Activated naive CD4-positive, alpha-beta T cell treated with anti-CD3 and anti-CD28 coated beads for 36 hours (primary cell): ENCODE measurements at regions of chr14 and their contacts with region 1.

Region 1: GRCh38 chr14:91893007-91893406 is 25.7 kb upstream of the TC2N start:
- DNase-seq: peak; percentile 62
- H3K4me3 Mint-ChIP-seq: no peak overlapping the region
- H3K27ac Mint-ChIP-seq: peak overlapping the region; percentile 92
- H3K4me1 Mint-ChIP-seq: peaks cover 56% of the 10 kb centered on the region
- H3K27me3 Mint-ChIP-seq: no peaks in the 10 kb centered on the region

Region 2: GRCh38 chr14:91714805-91715204 is 178.2 kb before region 1 on chr14:
- CTCF ChIA-PET with region 1: interaction called, 4 read pairs
- intact Hi-C with region 1: loop called (anchors 5 kb)
- DNase-seq: peak; percentile 70
- H3K4me3 Mint-ChIP-seq: peak overlapping the region; percentile 29
- H3K27ac Mint-ChIP-seq: no peak overlapping the region
- H3K4me1 Mint-ChIP-seq: peaks cover 9% of the 10 kb centered on the region
- H3K27me3 Mint-ChIP-seq: no peaks in the 10 kb centered on the region

Region 3: GRCh38 chr14:91836119-91836881 is 56.7 kb before region 1 on chr14:
- CTCF ChIA-PET with region 1: no interaction called
- intact Hi-C with region 1: loop called (anchors 1 kb)
- DNase-seq: peak; percentile 92
- H3K4me3 Mint-ChIP-seq: peak overlapping the region; percentile 94
- H3K27ac Mint-ChIP-seq: peak overlapping the region; percentile 84
- H3K4me1 Mint-ChIP-seq: peaks cover 70% of the 10 kb centered on the region
- H3K27me3 Mint-ChIP-seq: no peaks in the 10 kb centered on the region

Region 4: GRCh38 chr14:91858215-91858905 is 34.6 kb before region 1 on chr14:
- CTCF ChIA-PET with region 1: interaction called, 4 read pairs
- intact Hi-C with region 1: loop called (anchors 1 kb)
- DNase-seq: peak; percentile 62
- H3K4me3 Mint-ChIP-seq: peak overlapping the region; percentile 37
- H3K27ac Mint-ChIP-seq: peak overlapping the region; percentile 75
- H3K4me1 Mint-ChIP-seq: peaks cover 86% of the 10 kb centered on the region
- H3K27me3 Mint-ChIP-seq: no peaks in the 10 kb centered on the region